HCT116 (cell line): ENCODE measurements at regions of chr12 and their contacts with region 1.

Region 1: GRCh38 chr12:54538136-54538700 is 11.2 kb upstream of the PDE1B start:
- DNase-seq: no peak
- ATAC-seq: no peak
- H3K4me3 ChIP-seq: no peak overlapping the region
- H3K27ac ChIP-seq: no peak overlapping the region
- H3K4me1 ChIP-seq: no peaks in the 10 kb centered on the region
- H3K27me3 ChIP-seq: peaks cover 20% of the 10 kb centered on the region
- CTCF ChIP-seq: no peak
- POLR2A ChIP-seq: no peak
- RAD21 ChIP-seq: no peak

Region 2: GRCh38 chr12:54207484-54208294 is 330.5 kb before region 1 on chr12:
- CTCF ChIA-PET with region 1: no interaction called
- POLR2A ChIA-PET with region 1: no interaction called
- RAD21 ChIA-PET with region 1: no interaction called
- intact Hi-C with region 1: no loop called
- DNase-seq: peak; percentile 69
- ATAC-seq: peak; percentile 98
- H3K4me3 ChIP-seq: no peak overlapping the region
- H3K27ac ChIP-seq: no peak overlapping the region
- H3K4me1 ChIP-seq: peaks cover 2 to 10% of the 10 kb centered on the region in 2 experiments; a peak in 3 of 4 replicates
- H3K27me3 ChIP-seq: no peaks in the 10 kb centered on the region
- CTCF ChIP-seq: peak; percentile 92 to 98 (median 96)
- POLR2A ChIP-seq: no peak
- RAD21 ChIP-seq: peak; percentile 93

Region 3: DNA sequence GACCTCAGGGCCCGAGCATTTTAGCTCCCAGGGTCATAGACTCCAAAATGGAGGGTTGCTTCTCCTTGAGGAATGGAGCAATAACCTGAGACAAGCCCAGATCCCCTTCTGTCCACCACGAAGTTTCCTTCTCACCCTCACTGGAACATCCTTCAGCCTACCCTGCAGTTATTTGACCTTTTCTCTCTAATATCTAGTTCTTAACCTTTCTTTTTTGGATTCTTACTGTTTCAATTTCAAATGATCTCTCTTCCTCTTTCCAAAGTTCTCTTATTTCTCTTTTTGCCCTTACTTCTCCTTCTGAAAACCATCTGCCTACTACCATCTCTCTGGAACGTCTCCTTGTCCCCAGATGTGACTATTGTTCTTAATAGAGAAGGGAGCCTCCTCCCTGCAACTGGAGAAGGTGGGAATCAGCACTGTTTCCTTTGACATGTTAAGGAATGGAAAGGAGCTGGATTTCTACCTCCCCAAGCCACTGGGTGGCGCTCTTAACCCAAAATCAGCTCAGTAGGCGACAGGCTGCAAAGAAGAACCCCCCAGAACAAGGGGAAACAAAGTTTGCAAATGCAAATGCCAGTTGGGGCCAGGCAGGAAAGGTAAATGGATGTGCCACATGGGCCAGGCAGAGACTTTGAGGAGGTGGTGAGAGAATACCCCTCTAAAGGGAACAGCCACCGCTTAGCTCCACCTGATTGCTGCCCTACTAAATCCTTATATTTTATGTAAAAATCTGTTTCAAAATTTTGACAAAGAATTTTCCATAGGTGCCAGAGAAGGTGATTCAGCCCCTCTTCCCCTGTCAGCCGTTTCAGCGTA is 11.2 kb before region 1 on chr12:
- CTCF ChIA-PET with region 1: interaction called, 17 read pairs
- POLR2A ChIA-PET with region 1: no interaction called
- RAD21 ChIA-PET with region 1: no interaction called
- intact Hi-C with region 1: no loop called
- DNase-seq: peak; percentile 53
- ATAC-seq: peak; percentile 97
- H3K4me3 ChIP-seq: no peak overlapping the region
- H3K27ac ChIP-seq: no peak overlapping the region
- H3K4me1 ChIP-seq: 0 out of 4 replicates have a peak, but pooled peaks cover 0 to 3% of the 10 kb centered on the region in 2 experiments
- H3K27me3 ChIP-seq: peaks cover 51% of the 10 kb centered on the region
- CTCF ChIP-seq: peak; percentile 58 to 96 (median 89); a peak in 5 of 6 replicates
- POLR2A ChIP-seq: no peak
- RAD21 ChIP-seq: peak; percentile 78